ENCODE measurements at regions of chr7 and their contacts with region 1.

Region 1: DNA sequence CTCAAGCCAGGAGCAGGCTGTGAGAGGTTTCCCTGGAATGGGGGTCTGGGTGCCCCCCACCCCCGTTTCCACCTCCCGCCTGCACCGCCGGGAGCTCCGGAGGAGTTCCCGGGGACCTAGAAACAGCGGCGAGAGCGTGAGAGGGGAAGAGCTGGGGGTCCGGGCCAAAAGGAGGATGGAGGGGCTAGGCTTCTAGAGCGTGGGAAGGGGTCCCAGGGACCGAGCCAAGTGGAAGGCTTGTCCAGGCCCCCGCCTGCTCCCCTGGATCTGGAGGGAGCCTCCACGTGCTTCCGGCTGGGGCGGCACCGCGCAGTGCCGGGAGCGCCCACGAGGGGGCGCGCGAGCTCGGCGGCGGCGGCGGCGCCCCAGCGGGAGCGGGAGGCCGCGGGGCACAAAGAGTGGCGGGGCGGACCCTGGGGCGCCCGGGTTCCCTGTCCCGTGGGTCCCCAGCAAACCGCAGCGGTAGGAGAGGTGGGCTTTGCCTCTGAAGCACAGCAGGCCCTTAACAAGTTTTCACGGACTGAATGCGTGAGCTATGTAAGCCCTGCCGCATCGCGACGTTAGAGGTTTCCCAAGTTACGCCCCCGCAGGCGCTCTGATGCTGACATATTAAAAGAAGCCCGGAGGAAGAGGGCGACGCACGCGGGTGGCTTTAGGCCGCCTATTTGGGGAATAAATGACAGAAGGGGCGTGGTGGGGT is 104.4 kb upstream of the LRRC4 start:
- DNase-seq: peak; percentile 33 to 81 (median 46)
- ATAC-seq: peak; percentile 95
- H3K4me3 ChIP-seq: peak overlapping the region; percentile 62 to 66
- H3K4me3 Mint-ChIP-seq: peak overlapping the region; percentile 82
- H3K27ac ChIP-seq: no peak overlapping the region
- H3K27ac Mint-ChIP-seq: no peak overlapping the region
- H3K4me1 ChIP-seq: peaks cover 14% of the 10 kb centered on the region
- H3K4me1 Mint-ChIP-seq: peaks cover 17% of the 10 kb centered on the region
- H3K27me3 ChIP-seq: peaks cover 0 to 21% of the 10 kb centered on the region in 2 experiments
- H3K27me3 Mint-ChIP-seq: peaks cover 22% of the 10 kb centered on the region
- CTCF ChIP-seq: peak; percentile 91

Region 2: GRCh38 chr7:127959770-127960169 is 175.9 kb before region 1 on chr7:
- CTCF ChIA-PET with region 1: no interaction called
- POLR2A ChIA-PET with region 1: no interaction called
- intact Hi-C with region 1: no loop called
- DNase-seq: no peak
- ATAC-seq: no peak
- H3K4me3 ChIP-seq: no peak overlapping the region
- H3K4me3 Mint-ChIP-seq: no peak overlapping the region
- H3K27ac ChIP-seq: no peak overlapping the region
- H3K27ac Mint-ChIP-seq: no peak overlapping the region
- H3K4me1 ChIP-seq: no peaks in the 10 kb centered on the region
- H3K4me1 Mint-ChIP-seq: no peaks in the 10 kb centered on the region
- H3K27me3 ChIP-seq: no peaks in the 10 kb centered on the region
- H3K27me3 Mint-ChIP-seq: no peaks in the 10 kb centered on the region
- CTCF ChIP-seq: no peak

Region 3: DNA sequence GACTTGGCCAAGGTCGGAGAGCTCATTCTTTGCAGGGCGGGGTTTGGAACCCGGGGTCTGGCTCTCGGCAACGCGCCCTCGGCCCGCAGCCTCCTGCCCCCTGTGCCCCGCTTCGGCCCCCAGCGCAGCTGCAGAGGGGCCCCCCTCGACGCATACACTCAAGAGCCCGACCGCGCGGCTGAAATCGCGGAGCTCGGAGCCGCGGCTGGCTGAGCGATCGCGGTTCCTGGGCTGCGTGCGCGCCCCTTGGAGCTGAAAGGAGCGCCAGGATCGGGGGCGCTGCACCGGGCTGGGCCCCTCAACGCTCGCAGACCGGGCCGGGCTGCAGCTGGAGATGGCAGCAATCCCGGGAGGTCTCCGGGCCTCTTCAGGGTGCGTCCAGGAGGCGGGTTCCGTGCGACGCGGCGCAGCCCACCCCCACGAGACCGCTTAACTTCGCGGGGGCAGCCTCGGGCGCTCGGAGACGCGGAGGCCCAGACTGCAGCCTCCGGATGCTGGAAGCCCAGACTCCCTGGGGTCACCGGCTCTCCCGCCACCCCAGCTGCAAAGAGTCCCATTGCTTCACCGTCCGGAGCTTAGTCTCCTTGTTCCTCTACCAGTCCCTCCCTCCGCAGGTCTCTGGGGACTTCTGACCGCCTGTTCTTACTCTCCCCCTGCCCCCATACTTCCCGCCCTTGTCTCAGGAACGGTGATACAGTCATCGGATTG is 31.5 kb before region 1 on chr7:
- CTCF ChIA-PET with region 1: interaction called, 14 read pairs
- POLR2A ChIA-PET with region 1: no interaction called
- intact Hi-C with region 1: no loop called
- DNase-seq: peak in 4 of 9 experiments; percentile 26 to 59 (median 43)
- ATAC-seq: peak; percentile 14
- H3K4me3 ChIP-seq: peak overlapping the region; percentile 54 to 56
- H3K4me3 Mint-ChIP-seq: peak overlapping the region; percentile 84
- H3K27ac ChIP-seq: no peak overlapping the region
- H3K27ac Mint-ChIP-seq: peak overlapping the region; percentile 71
- H3K4me1 ChIP-seq: peaks cover 45% of the 10 kb centered on the region
- H3K4me1 Mint-ChIP-seq: peaks cover 63% of the 10 kb centered on the region
- H3K27me3 ChIP-seq: no peaks in the 10 kb centered on the region
- H3K27me3 Mint-ChIP-seq: no peaks in the 10 kb centered on the region
- CTCF ChIP-seq: no peak

Region 4: DNA sequence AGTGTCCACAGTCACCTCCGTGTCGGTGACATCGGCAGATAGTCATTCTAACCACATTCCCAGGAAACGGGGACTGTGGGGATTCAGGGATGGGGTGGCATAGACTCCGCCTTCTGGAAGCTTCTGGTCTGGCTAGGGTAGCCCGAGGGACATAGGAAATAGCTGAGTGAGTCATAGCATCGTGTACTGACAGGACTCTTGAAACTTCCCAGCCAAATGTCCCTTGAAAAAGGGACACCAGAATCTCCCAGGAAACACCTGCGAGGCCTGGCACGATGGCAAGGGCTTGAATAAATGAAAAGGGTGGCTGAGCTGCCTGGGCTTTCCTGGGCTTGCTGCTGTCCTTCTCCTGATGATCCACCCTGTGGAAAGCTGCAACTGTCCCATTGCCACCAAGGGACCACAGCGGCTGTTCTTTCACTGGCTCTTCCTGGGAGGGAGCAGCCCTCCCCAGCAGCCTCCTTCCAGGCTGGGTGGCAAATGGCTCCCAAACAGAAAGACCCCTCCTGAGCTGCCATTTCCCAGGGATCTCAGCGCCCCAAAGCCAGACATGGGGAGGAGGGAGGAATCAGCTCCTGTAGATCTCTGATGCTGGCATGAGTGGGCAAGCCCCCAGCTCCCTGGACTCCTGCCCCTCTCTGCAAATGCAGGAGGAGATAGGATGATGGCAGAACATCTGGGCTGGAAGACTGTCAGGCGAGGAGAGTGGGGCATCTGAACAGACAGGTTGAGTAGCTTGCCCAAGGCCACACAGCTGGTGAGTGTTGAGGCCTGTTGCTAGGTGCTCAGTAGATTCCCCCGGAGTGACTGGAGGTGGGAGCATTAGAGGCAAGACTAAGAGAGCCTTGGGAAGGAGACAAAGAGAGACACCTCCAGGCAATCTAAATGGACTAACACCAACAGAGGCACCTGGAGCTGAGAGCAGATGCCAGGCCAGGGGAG is 20.0 kb before region 1 on chr7:
- CTCF ChIA-PET with region 1: interaction called, 11 read pairs
- POLR2A ChIA-PET with region 1: interaction called, 9 read pairs
- intact Hi-C with region 1: loop called in 1 of 2 experiments (anchors 1 kb)
- DNase-seq: peak in 1 of 9 experiments; percentile 29
- ATAC-seq: no peak
- H3K4me3 ChIP-seq: no peak overlapping the region
- H3K4me3 Mint-ChIP-seq: no peak overlapping the region
- H3K27ac ChIP-seq: no peak overlapping the region
- H3K27ac Mint-ChIP-seq: no peak overlapping the region
- H3K4me1 ChIP-seq: peaks cover 25% of the 10 kb centered on the region
- H3K4me1 Mint-ChIP-seq: peaks cover 34% of the 10 kb centered on the region
- H3K27me3 ChIP-seq: no peaks in the 10 kb centered on the region
- H3K27me3 Mint-ChIP-seq: no peaks in the 10 kb centered on the region
- CTCF ChIP-seq: no peak

Region 5: DNA sequence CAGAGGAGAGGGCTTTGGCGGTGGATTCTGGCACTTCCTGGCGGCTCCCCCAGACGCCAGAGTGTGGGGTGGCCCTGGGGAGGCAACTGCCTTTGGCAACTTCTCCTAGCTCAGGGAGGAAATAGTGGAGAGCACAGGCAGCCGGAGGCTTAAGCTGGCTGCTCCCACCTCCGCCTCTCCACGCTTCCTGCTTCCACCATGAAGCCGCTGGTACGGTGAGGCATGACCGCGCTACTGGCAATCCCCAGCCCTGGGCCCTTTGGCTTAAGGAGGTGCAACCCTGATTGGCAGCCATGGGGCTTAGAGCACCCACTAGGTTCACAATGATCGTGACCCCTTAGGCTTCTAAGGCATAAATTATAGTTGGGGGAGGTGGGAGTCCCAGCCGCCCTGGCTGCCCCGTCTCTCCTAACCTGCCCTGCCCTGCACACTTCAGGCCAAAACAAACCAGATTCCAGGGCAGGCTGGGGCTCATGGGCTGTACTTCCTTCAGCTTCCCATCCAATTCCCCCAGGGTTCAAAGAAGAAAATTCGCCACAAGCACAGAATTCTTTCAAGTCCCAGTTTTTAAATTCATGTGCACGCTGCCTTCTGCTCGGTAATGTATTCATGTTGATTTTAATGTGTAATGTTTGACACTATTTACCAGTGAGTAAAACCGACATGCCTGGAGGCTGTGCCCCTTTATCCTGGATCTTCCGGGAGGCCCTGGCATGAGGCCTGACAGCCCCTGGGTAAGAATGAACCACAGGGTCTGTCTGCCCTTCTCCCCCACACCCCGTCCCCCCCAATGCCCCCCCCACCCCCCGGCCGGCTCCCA is 13.7 kb before region 1 on chr7:
- CTCF ChIA-PET with region 1: interaction called, 11 read pairs
- POLR2A ChIA-PET with region 1: interaction called, 5 read pairs
- intact Hi-C with region 1: no loop called
- DNase-seq: peak in 1 of 9 experiments; percentile 4
- ATAC-seq: no peak
- H3K4me3 ChIP-seq: no peak overlapping the region
- H3K4me3 Mint-ChIP-seq: no peak overlapping the region
- H3K27ac ChIP-seq: no peak overlapping the region
- H3K27ac Mint-ChIP-seq: no peak overlapping the region
- H3K4me1 ChIP-seq: no peaks in the 10 kb centered on the region
- H3K4me1 Mint-ChIP-seq: peaks cover 15% of the 10 kb centered on the region
- H3K27me3 ChIP-seq: no peaks in the 10 kb centered on the region
- H3K27me3 Mint-ChIP-seq: no peaks in the 10 kb centered on the region
- CTCF ChIP-seq: no peak

Region 6: GRCh38 chr7:128158370-128158769 is 22.7 kb after region 1 on chr7:
- CTCF ChIA-PET with region 1: no interaction called
- POLR2A ChIA-PET with region 1: no interaction called
- intact Hi-C with region 1: no loop called
- DNase-seq: no peak
- ATAC-seq: no peak
- H3K4me3 ChIP-seq: no peak overlapping the region
- H3K4me3 Mint-ChIP-seq: no peak overlapping the region
- H3K27ac ChIP-seq: no peak overlapping the region
- H3K27ac Mint-ChIP-seq: no peak overlapping the region
- H3K4me1 ChIP-seq: no peaks in the 10 kb centered on the region
- H3K4me1 Mint-ChIP-seq: no peaks in the 10 kb centered on the region
- H3K27me3 ChIP-seq: no peaks in the 10 kb centered on the region
- H3K27me3 Mint-ChIP-seq: peaks cover 15% of the 10 kb centered on the region
- CTCF ChIP-seq: no peak

Region 7: GRCh38 chr7:128191136-128191844 is 55.6 kb after region 1 on chr7:
- CTCF ChIA-PET with region 1: no interaction called
- POLR2A ChIA-PET with region 1: no interaction called
- intact Hi-C with region 1: no loop called
- DNase-seq: peak in 1 of 9 experiments; percentile 4
- ATAC-seq: no peak
- H3K4me3 ChIP-seq: no peak overlapping the region
- H3K4me3 Mint-ChIP-seq: no peak overlapping the region
- H3K27ac ChIP-seq: no peak overlapping the region
- H3K27ac Mint-ChIP-seq: no peak overlapping the region
- H3K4me1 ChIP-seq: no peaks in the 10 kb centered on the region
- H3K4me1 Mint-ChIP-seq: no peaks in the 10 kb centered on the region
- H3K27me3 ChIP-seq: peaks cover 0 to 4% of the 10 kb centered on the region in 2 experiments
- H3K27me3 Mint-ChIP-seq: peaks cover 30% of the 10 kb centered on the region
- CTCF ChIP-seq: no peak

Region 8: GRCh38 chr7:128322040-128322643 is 186.5 kb after region 1 on chr7:
- CTCF ChIA-PET with region 1: interaction called, 6 read pairs
- POLR2A ChIA-PET with region 1: no interaction called
- intact Hi-C with region 1: loop called (anchors 1 to 5 kb)
- DNase-seq: peak in 5 of 9 experiments; percentile 18 to 77 (median 32)
- ATAC-seq: peak; percentile 79
- H3K4me3 ChIP-seq: no peak overlapping the region
- H3K4me3 Mint-ChIP-seq: peak overlapping the region; percentile 36
- H3K27ac ChIP-seq: peak overlapping the region in 1 of 2 experiments; percentile 80
- H3K27ac Mint-ChIP-seq: peak overlapping the region; percentile 91
- H3K4me1 ChIP-seq: peaks cover 39% of the 10 kb centered on the region
- H3K4me1 Mint-ChIP-seq: peaks cover 43% of the 10 kb centered on the region
- H3K27me3 ChIP-seq: no peaks in the 10 kb centered on the region
- H3K27me3 Mint-ChIP-seq: no peaks in the 10 kb centered on the region
- CTCF ChIP-seq: peak; percentile 36

Region 9: DNA sequence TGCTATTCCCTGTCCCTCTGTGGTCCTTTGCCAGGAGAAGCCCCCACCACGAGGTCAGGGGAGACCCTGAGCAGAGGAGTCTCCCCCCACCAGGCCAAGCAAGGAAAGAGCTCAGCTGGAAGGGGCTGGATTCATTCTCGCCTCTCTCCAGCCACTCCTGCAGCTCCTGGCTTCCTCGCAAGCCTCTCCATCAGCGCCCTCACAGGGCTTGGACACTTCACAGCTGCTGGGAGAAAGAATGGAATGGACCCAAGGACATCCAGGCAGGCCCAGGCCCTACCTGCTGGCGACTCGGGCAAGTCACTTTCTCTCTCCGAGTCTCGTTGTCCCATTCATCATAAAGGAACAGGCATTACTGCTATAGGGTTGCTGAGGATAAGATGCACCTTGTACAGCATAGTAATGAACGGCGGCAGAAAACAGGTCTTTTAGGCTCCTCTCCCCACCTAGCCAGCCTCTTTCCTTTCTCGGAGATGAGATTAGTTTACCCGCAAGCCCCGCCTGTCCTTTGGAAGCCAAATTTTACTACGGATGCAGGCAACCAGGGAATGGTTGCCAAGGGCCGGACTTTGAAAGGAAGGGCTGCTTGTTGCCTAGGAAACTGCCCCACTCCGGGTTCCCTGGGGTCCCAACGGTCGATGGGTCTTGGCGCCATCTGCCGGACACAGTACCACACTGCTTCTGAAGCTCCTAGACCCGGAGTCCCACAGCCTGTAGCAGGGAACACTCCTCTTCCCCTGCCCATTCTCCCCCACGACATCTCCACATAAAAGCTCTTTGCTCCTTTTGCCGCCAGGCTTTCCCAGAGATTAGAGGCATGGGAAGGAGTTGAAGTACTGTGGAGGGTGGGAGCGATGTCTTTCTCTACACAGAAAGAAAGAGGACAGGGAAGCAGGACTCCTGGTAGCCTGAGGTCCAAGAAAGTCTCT is 251.8 kb after region 1 on chr7:
- CTCF ChIA-PET with region 1: no interaction called
- POLR2A ChIA-PET with region 1: no interaction called
- intact Hi-C with region 1: loop called in 1 of 2 experiments (anchors 5 kb)
- DNase-seq: peak; percentile 49 to 77 (median 71)
- ATAC-seq: peak; percentile 98
- H3K4me3 ChIP-seq: no peak overlapping the region
- H3K4me3 Mint-ChIP-seq: no peak overlapping the region
- H3K27ac ChIP-seq: no peak overlapping the region
- H3K27ac Mint-ChIP-seq: no peak overlapping the region
- H3K4me1 ChIP-seq: no peaks in the 10 kb centered on the region
- H3K4me1 Mint-ChIP-seq: no peaks in the 10 kb centered on the region
- H3K27me3 ChIP-seq: no peaks in the 10 kb centered on the region
- H3K27me3 Mint-ChIP-seq: no peaks in the 10 kb centered on the region
- CTCF ChIP-seq: peak; percentile 73

Measured in CD8-positive, alpha-beta T cell (primary cell).